A549 (cell line): ENCODE measurements at regions of chr5 and their contacts with region 1.

Region 1: GRCh38 chr5:141349917-141350619 is at the start of gene PCDHGB1:
- DNase-seq: peak; percentile 80 to 87
- ATAC-seq: peak; percentile 99
- H3K4me3 ChIP-seq: peak within 1 kb of the TSS; percentile 45
- H3K27ac ChIP-seq: peak within 1 kb of the TSS; percentile 24 to 73; a peak in 5 of 6 replicates
- H3K4me1 ChIP-seq: no peaks in the 10 kb centered on the region
- CTCF ChIP-seq: peak; percentile 75
- EP300 ChIP-seq: no peak
- POLR2A ChIP-seq: peak; percentile 28
- RAD21 ChIP-seq: peak; percentile 71 to 73
- polyA plus RNA-seq, gene PCDHGB1: 3.7 and 3.9 TPM in 2 replicates

Region 2: DNA sequence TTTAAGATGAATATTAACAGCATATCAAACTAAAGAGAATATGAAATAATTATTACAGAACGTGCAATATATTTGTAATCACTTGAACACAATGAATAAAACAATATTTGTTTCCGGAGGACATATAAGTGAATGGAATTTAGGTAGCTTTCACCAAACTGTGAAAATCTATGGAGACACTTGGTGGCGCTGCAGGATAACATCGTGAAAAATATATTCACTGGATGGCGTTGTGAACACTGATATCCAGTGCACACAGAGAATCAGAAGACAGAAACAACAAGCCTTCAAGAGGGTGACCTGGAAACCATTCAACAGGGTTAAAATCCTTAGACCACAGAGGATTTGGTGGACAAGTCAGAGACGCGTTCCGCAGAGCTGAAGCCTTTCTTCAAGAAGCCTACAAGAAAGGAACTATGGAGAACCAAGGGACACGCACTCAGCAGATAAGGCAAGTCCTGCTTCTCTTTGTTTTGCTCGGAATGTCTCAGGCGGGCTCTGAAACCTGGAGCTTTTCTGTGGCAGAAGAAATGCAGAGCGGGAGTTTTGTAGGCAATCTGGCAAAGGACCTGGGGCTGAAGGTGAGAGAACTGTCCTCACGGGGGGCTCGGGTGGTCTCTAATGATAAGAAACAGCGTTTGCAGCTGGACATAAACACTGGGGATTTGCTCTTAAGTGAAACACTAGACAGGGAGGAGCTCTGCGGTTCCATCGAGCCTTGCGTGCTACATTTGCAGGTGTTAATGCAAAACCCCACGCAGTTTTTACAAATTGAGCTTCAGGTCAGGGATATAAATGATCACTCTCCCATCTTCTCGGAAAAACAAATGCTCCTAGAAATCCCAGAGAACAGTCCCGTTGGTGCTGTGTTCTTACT is 150.5 kb before region 1 on chr5 and contains the start of gene PCDHB11:
- CTCF ChIA-PET with region 1: interaction called, 11 read pairs
- POLR2A ChIA-PET with region 1: no interaction called
- DNase-seq: peak; percentile 6 to 39
- ATAC-seq: peak; percentile 68 to 78; a peak in 5 of 6 replicates
- H3K4me3 ChIP-seq: peak within 1 kb of the TSS; percentile 30; the same call in 2 of the 3 replicates
- H3K27ac ChIP-seq: no peak within 1 kb of the TSS
- H3K4me1 ChIP-seq: no peaks in the 10 kb centered on the region
- CTCF ChIP-seq: peak; percentile 38
- EP300 ChIP-seq: no peak
- POLR2A ChIP-seq: no peak
- RAD21 ChIP-seq: peak; percentile 31 to 46; a peak in 4 of 5 replicates
- polyA plus RNA-seq, gene PCDHB11: 0.21 and 0.22 TPM in 2 replicates

Region 3: DNA sequence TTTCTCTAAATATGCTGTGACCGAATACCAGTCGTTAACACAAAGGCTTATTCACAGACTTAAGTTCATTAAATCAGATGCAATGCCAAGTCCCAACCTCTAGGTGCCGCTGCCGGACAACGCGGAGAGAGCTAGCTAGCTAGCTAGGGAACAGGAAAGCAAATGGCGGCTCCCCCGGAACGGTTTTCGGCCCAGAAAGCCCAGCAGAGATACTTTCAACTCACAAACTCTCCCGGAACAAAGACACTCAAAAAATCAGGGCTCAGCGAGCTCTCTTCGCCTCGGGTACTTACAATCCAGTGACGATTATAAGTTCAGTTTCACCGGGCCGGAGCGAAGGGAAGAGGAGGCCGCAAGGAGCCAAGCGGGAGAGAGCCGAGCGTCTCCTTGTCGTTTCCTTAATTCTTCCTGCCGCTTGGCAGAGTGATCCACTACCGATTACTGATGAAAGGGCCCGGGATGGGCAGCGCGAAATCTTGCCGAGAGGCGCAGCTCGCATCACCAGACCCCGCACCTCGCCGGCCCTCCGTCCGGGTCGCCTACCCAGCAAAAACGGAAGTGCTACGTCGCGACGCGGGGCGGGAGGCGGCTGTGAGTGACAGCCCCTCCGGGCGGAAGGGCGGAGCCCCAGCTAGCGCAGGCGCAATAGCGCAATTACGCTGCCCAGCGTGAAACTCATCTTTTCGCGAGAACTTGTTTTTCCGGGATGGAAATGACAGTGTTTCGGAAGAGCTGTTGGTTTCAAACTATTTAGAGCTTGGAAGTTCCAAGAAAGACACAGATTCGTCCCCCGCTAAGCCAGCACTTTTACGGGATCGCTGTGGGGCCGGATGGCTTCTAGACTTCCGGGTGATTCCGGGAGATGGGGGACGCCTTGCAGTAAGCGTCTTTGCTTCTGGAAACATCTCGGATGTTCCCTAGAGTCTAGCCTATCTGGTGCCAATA is 29.6 kb before region 1 on chr5 and contains the start of gene TAF7:
- CTCF ChIA-PET with region 1: interaction called, 12 read pairs
- POLR2A ChIA-PET with region 1: interaction called, 7 read pairs
- DNase-seq: peak; percentile 75 to 96
- ATAC-seq: peak; percentile 97 to 98
- H3K4me3 ChIP-seq: peak within 1 kb of the TSS; percentile 68
- H3K27ac ChIP-seq: peak within 1 kb of the TSS; percentile 84 to 93
- H3K4me1 ChIP-seq: no peaks in the 10 kb centered on the region
- CTCF ChIP-seq: peak; percentile 78
- EP300 ChIP-seq: no peak
- POLR2A ChIP-seq: peak; percentile 79
- RAD21 ChIP-seq: no peak; a peak in 1 of 5 replicates
- polyA plus RNA-seq, gene TAF7: 78.1 and 90.6 TPM in 2 replicates

Region 4: GRCh38 chr5:141326088-141326854 is 23.8 kb before region 1 on chr5:
- CTCF ChIA-PET with region 1: interaction called, 12 read pairs
- POLR2A ChIA-PET with region 1: interaction called, 3 read pairs
- DNase-seq: peak in 1 of 2 experiments; percentile 51
- ATAC-seq: peak in 1 of 2 experiments; percentile 75; a peak in 3 of 6 replicates
- H3K4me3 ChIP-seq: 0 out of 3 replicates have a peak overlapping the region, but pooled peaks have one; percentile 14
- H3K27ac ChIP-seq: no peak overlapping the region
- H3K4me1 ChIP-seq: no peaks in the 10 kb centered on the region
- CTCF ChIP-seq: peak; percentile 9; the same call in 1 of the 3 replicates
- EP300 ChIP-seq: no peak
- POLR2A ChIP-seq: no peak
- RAD21 ChIP-seq: 0 out of 5 replicates have a peak, but pooled peaks of 1 of the 2 experiments have one; percentile 25

Region 5: GRCh38 chr5:141338538-141339306 is 11.3 kb before region 1 on chr5 and contains the start of gene PCDHGA2:
- CTCF ChIA-PET with region 1: interaction called, 21 read pairs
- POLR2A ChIA-PET with region 1: interaction called, 6 read pairs
- DNase-seq: peak; percentile 24 to 74
- ATAC-seq: peak; percentile 54 to 87; a peak in 4 of 6 replicates
- H3K4me3 ChIP-seq: peak within 1 kb of the TSS; percentile 45
- H3K27ac ChIP-seq: peak within 1 kb of the TSS; percentile 59 to 70
- H3K4me1 ChIP-seq: no peaks in the 10 kb centered on the region
- CTCF ChIP-seq: peak; percentile 35; the same call in 2 of the 3 replicates
- EP300 ChIP-seq: no peak
- POLR2A ChIP-seq: no peak
- RAD21 ChIP-seq: peak; percentile 46 to 53; a peak in 4 of 5 replicates
- polyA plus RNA-seq, gene PCDHGA2: 1.6 and 1.7 TPM in 2 replicates

Region 6: DNA sequence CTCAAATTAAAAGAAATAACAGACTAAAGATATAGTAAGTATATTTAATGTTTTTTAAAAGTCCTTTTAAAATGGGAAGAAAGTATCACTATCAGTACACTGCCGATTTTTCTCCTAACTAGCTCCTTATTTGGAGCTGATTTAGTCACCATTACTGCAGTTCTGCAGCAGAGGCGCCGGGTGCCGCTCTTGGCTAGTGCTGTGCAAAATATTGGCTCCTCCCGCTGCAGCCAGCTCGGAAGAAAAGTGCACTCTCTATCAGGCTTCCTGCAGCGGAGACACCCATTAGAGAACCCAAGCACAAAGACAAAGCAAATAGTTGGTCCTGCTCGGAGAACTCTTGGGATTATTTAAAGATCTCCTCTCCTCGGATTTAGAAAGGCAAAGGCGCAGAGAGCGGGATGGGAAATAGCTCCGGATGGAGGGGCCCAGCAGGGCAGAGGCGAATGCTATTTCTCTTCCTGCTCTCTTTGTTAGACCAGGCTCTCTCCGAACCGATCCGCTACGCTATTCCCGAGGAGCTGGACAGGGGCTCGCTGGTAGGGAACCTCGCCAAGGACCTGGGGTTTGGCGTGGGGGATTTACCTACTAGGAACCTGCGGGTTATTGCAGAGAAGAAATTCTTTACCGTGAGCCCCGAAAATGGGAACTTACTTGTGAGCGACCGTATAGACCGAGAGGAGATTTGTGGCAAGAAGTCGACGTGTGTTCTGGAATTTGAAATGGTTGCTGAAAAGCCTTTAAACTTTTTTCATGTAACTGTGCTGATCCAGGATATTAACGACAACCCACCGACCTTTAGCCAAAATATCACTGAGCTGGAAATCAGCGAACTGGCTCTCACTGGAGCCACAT is 20.2 kb after region 1 on chr5 and contains the start of gene PCDHGB3:
- CTCF ChIA-PET with region 1: interaction called, 21 read pairs
- POLR2A ChIA-PET with region 1: no interaction called
- DNase-seq: peak in 1 of 2 experiments; percentile 55
- ATAC-seq: peak; percentile 90 to 96
- H3K4me3 ChIP-seq: peak within 1 kb of the TSS; percentile 29
- H3K27ac ChIP-seq: peak within 1 kb of the TSS; percentile 2 to 54; a peak in 2 of 6 replicates
- H3K4me1 ChIP-seq: no peaks in the 10 kb centered on the region
- CTCF ChIP-seq: peak; percentile 28; the same call in 2 of the 3 replicates
- EP300 ChIP-seq: no peak
- POLR2A ChIP-seq: no peak
- RAD21 ChIP-seq: peak; percentile 50 to 52
- polyA plus RNA-seq, gene PCDHGB3: 1.1 and 1.2 TPM in 2 replicates